ENCODE measurements at regions of chr12 and their contacts with region 1.

Region 1: DNA sequence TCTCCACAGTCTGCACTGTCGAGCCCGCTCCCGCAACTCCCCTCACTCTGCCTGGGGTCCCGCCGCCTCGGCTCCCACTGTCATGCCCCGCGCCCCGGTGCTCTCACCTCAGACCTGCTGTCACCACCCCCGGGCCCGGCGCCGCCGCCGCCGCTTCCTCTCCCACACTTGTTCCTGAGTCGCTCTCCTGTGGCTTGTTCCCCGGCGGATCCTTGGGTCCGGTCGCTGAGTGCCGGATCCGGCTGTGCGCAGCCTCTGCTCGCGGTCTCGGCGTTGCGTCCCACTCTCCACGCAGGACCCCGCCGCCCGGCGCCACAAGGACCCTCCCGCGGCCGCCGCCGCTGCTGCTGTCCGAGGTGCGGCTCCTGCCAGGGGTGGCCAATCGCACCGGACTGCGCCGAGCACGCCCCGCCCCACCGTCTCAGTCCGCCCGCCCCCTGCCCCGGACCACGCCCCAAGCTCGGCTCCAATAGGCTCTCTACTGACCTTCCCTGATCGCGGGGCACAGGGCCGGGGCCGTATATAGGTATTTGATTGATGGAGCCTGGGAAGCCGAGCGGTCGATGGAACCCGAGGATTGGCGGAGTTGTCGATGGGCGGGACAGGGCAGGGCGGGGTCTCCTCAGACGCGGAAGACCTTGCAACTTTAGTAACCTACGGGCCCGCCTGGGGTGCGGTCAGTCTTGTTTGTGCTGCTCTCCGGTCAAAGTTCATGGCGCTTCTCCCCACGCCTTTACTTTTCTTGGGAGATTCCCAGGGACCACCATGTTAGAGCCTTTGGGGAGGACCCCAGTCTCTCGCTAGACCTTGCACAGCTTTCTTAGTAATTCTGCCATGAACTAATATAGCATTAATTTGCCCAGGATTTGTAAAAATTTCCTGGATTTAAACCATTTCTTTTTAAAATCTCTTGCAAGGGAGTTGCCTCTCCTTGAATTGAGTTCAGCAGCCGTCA is at the start of gene TAOK3:
- DNase-seq: peak; percentile 90 to 98 (median 96)
- ATAC-seq: peak; percentile 95
- H3K4me3 ChIP-seq: peak within 1 kb of the TSS; percentile 93
- H3K4me3 Mint-ChIP-seq: peak within 1 kb of the TSS; percentile 90 to 99 (median 93)
- H3K27ac ChIP-seq: peak within 1 kb of the TSS; percentile 78
- H3K27ac Mint-ChIP-seq: peak within 1 kb of the TSS; percentile 86 to 99 (median 93)
- H3K4me1 ChIP-seq: peaks cover 26 to 27% of the 10 kb centered on the region in 2 donors
- H3K4me1 Mint-ChIP-seq: peaks cover 34 to 63% (median 51%) of the 10 kb centered on the region in 7 donors
- H3K27me3 ChIP-seq: no peaks in the 10 kb centered on the region
- H3K27me3 Mint-ChIP-seq: peaks cover 0 to 16% (median 0%) of the 10 kb centered on the region in 5 donors
- total RNA-seq, gene TAOK3: 55.2 to 102 (median 67.3) TPM

Region 2: DNA sequence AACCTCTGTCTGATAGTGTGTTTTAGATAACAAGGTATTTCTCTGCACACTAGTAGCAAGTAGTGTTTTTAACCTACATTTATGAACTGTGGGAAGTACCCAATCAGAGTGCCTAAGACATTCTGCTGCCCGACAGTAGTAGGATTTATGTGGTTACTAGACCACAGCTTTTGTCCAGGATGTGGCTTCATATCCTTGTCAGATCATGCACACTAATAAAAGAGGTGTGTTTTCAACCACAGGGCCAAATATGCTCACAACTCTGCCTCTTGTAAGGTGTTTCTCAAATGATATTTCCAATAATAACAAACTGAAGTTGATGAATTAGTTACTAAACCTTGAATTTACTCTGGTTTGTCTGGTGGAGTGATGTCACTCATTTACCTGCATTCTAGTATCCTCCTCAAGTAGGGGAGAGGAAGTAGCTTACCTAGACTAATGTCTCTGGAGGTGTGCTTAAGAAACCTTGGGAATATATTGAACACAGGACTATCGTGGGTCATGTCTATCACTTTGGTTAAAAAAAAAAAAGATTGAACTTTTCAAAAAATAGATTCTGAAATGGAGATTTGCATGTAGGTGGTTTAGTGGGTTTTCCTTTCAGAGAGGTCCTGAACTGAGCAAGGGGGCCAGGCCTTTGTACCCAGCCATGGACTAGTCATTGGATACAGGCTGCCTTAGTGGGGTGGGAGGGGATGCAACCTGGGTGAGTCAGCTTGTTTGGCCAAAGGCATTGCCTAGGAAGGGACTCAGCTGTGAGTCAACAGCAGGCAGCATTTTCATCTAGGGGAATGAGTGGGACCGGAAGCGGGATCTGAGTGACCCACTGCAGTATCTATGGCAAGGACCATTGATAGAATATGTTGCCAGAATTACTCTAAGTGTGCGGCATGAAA is 1448.0 kb before region 1 on chr12:
- CTCF ChIA-PET with region 1: no interaction called
- POLR2A ChIA-PET with region 1: no interaction called
- intact Hi-C with region 1: loop called in 1 of 2 experiments (anchors 10 kb)
- DNase-seq: peak in 8 of 9 donors; percentile 46 to 86 (median 80)
- ATAC-seq: peak; percentile 96
- H3K4me3 ChIP-seq: peak overlapping the region; percentile 21
- H3K4me3 Mint-ChIP-seq: peak overlapping the region; percentile 27 to 82 (median 77)
- H3K27ac ChIP-seq: no peak overlapping the region
- H3K27ac Mint-ChIP-seq: peak overlapping the region; percentile 40 to 82 (median 62)
- H3K4me1 ChIP-seq: peaks cover 26 to 59% of the 10 kb centered on the region in 2 donors
- H3K4me1 Mint-ChIP-seq: peaks cover 51 to 86% (median 70%) of the 10 kb centered on the region in 7 donors
- H3K27me3 ChIP-seq: no peaks in the 10 kb centered on the region
- H3K27me3 Mint-ChIP-seq: peaks cover 0 to 8% (median 0%) of the 10 kb centered on the region in 5 donors

Region 3: GRCh38 chr12:118061011-118061875 is 311.6 kb before region 1 on chr12 and contains the start of gene WSB2:
- CTCF ChIA-PET with region 1: interaction called, 4 read pairs
- POLR2A ChIA-PET with region 1: interaction called, 3 read pairs
- intact Hi-C with region 1: loop called (anchors 2 kb)
- DNase-seq: peak; percentile 24 to 81 (median 39)
- ATAC-seq: peak; percentile 53
- H3K4me3 ChIP-seq: peak within 1 kb of the TSS; percentile 88
- H3K4me3 Mint-ChIP-seq: peak within 1 kb of the TSS; percentile 88 to 100 (median 96)
- H3K27ac ChIP-seq: peak within 1 kb of the TSS; percentile 80
- H3K27ac Mint-ChIP-seq: peak within 1 kb of the TSS; percentile 92 to 98 (median 94)
- H3K4me1 ChIP-seq: peaks cover 13 to 32% of the 10 kb centered on the region in 2 donors
- H3K4me1 Mint-ChIP-seq: peaks cover 44 to 65% (median 57%) of the 10 kb centered on the region in 7 donors
- H3K27me3 ChIP-seq: no peaks in the 10 kb centered on the region
- H3K27me3 Mint-ChIP-seq: no peaks in the 10 kb centered on the region
- total RNA-seq, gene WSB2: 12.2 to 52.2 (median 19.1) TPM

Region 4: GRCh38 chr12:118299791-118300460 is 72.9 kb before region 1 on chr12:
- CTCF ChIA-PET with region 1: interaction called, 6 read pairs
- POLR2A ChIA-PET with region 1: no interaction called
- intact Hi-C with region 1: loop called (anchors 1 to 5 kb)
- DNase-seq: no peak
- ATAC-seq: no peak
- H3K4me3 ChIP-seq: no peak overlapping the region
- H3K4me3 Mint-ChIP-seq: no peak overlapping the region
- H3K27ac ChIP-seq: no peak overlapping the region
- H3K27ac Mint-ChIP-seq: peak overlapping the region in 5 of 9 donors; percentile 18 to 67 (median 48)
- H3K4me1 ChIP-seq: peaks cover 0 to 14% of the 10 kb centered on the region in 2 donors
- H3K4me1 Mint-ChIP-seq: peaks cover 23 to 52% (median 47%) of the 10 kb centered on the region in 7 donors
- H3K27me3 ChIP-seq: no peaks in the 10 kb centered on the region
- H3K27me3 Mint-ChIP-seq: no peaks in the 10 kb centered on the region

Region 5: GRCh38 chr12:118404876-118405521 is 32.2 kb after region 1 on chr12:
- CTCF ChIA-PET with region 1: interaction called, 3 read pairs
- POLR2A ChIA-PET with region 1: no interaction called
- intact Hi-C with region 1: loop called in 1 of 2 experiments (anchors 1 kb)
- DNase-seq: peak in 7 of 9 donors; percentile 18 to 42 (median 33)
- ATAC-seq: peak; percentile 72
- H3K4me3 ChIP-seq: no peak overlapping the region
- H3K4me3 Mint-ChIP-seq: no peak overlapping the region
- H3K27ac ChIP-seq: no peak overlapping the region
- H3K27ac Mint-ChIP-seq: no peak overlapping the region
- H3K4me1 ChIP-seq: no peaks in the 10 kb centered on the region
- H3K4me1 Mint-ChIP-seq: peaks cover 0 to 3% (median 0%) of the 10 kb centered on the region in 7 donors
- H3K27me3 ChIP-seq: no peaks in the 10 kb centered on the region
- H3K27me3 Mint-ChIP-seq: no peaks in the 10 kb centered on the region

Region 6: GRCh38 chr12:120116792-120117651 is 1744.2 kb after region 1 on chr12:
- CTCF ChIA-PET with region 1: no interaction called
- POLR2A ChIA-PET with region 1: no interaction called
- intact Hi-C with region 1: loop called in 1 of 2 experiments (anchors 2 kb)
- DNase-seq: peak; percentile 95 to 100 (median 98)
- ATAC-seq: peak; percentile 91
- H3K4me3 ChIP-seq: peak overlapping the region; percentile 82
- H3K4me3 Mint-ChIP-seq: peak overlapping the region; percentile 78 to 95 (median 90)
- H3K27ac ChIP-seq: peak overlapping the region; percentile 84
- H3K27ac Mint-ChIP-seq: peak overlapping the region; percentile 80 to 97 (median 90)
- H3K4me1 ChIP-seq: peaks cover 46 to 48% of the 10 kb centered on the region in 2 donors
- H3K4me1 Mint-ChIP-seq: peaks cover 64 to 86% (median 80%) of the 10 kb centered on the region in 7 donors
- H3K27me3 ChIP-seq: no peaks in the 10 kb centered on the region
- H3K27me3 Mint-ChIP-seq: no peaks in the 10 kb centered on the region

Measured in naive thymus-derived CD4-positive, alpha-beta T cell (primary cell).